A673 (cell line): ENCODE measurements at regions of chr7 and their contacts with region 1.

Region 1: GRCh38 chr7:25565949-25566348 is 337.7 kb upstream of the NPVF start:
- DNase-seq: peak; percentile 65
- H3K4me3 ChIP-seq: no peak overlapping the region
- H3K27ac ChIP-seq: no peak overlapping the region
- H3K4me1 ChIP-seq: peaks cover 8% of the 10 kb centered on the region
- H3K27me3 ChIP-seq: no peaks in the 10 kb centered on the region
- CTCF ChIP-seq: peak; percentile 100

Region 2: DNA sequence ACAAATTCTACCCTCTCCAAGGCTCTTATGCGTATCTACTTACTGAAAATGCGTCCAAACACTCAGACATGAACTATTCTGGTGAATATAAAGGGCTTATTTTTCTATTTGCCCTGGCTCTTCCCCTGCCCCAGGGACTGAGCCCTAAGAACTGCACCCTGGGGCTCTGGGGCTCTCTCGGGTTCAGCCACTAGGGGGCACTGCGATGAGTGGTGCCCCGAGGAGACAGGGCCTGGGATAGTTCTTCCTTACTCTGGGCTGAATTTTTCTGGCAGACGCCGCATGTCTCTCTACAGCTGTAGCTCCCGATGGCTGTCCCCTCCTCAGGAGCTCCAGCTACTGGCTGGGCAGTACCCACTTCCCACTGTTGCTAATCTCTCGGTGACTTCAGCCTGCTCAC is 777.9 kb before region 1 on chr7:
- CTCF ChIA-PET with region 1: no interaction called
- POLR2A ChIA-PET with region 1: no interaction called
- intact Hi-C with region 1: no loop called
- DNase-seq: no peak
- H3K4me3 ChIP-seq: no peak overlapping the region
- H3K27ac ChIP-seq: no peak overlapping the region
- H3K4me1 ChIP-seq: no peaks in the 10 kb centered on the region
- H3K27me3 ChIP-seq: no peaks in the 10 kb centered on the region
- CTCF ChIP-seq: peak; percentile 58

Region 3: DNA sequence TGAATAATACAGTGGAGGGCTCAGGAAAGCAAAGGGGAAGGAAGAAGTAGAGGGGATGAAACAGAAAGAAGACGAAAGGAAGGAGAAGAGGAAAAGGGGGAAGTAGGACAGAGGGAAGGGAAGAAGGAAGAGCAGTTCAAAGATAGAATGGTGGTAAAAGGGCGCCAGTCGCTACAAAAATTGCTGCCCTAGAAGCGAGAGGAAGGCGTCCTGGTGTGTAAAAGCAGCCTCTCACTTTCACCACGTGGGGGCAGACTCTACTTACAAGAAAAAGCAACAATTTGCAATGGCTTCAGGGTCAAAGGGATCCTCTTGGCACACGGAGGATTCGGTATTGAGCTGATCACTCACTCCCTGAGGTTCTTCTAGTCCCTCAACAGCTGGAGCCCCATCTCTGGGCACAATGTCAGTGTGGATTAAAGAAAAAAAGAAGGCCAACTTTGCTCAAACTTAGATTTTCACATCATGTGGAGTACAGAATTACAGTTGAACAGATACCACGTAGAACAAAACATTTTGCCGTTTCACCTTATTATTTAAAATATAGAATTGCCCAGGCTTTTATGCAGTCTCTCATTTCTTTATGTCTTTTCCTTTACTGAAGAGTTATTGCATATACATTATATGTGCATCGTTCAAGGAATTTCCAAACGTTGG is 306.2 kb before region 1 on chr7:
- CTCF ChIA-PET with region 1: interaction called, 21 read pairs
- POLR2A ChIA-PET with region 1: no interaction called
- intact Hi-C with region 1: loop called (anchors 1 kb)
- DNase-seq: peak; percentile 88
- H3K4me3 ChIP-seq: no peak overlapping the region
- H3K27ac ChIP-seq: no peak overlapping the region
- H3K4me1 ChIP-seq: peaks cover 22% of the 10 kb centered on the region
- H3K27me3 ChIP-seq: peaks cover 9% of the 10 kb centered on the region
- CTCF ChIP-seq: peak; percentile 90

Region 4: GRCh38 chr7:25389489-25390106 is 176.4 kb before region 1 on chr7:
- CTCF ChIA-PET with region 1: interaction called, 3 read pairs
- POLR2A ChIA-PET with region 1: no interaction called
- intact Hi-C with region 1: loop called (anchors 1 kb)
- DNase-seq: peak; percentile 59
- H3K4me3 ChIP-seq: no peak overlapping the region
- H3K27ac ChIP-seq: no peak overlapping the region
- H3K4me1 ChIP-seq: peaks cover 8% of the 10 kb centered on the region
- H3K27me3 ChIP-seq: peaks cover 69% of the 10 kb centered on the region
- CTCF ChIP-seq: peak; percentile 63

Region 5: GRCh38 chr7:25399000-25399750 is 166.8 kb before region 1 on chr7:
- CTCF ChIA-PET with region 1: interaction called, 10 read pairs
- POLR2A ChIA-PET with region 1: no interaction called
- intact Hi-C with region 1: no loop called
- DNase-seq: no peak
- H3K4me3 ChIP-seq: no peak overlapping the region
- H3K27ac ChIP-seq: no peak overlapping the region
- H3K4me1 ChIP-seq: no peaks in the 10 kb centered on the region
- H3K27me3 ChIP-seq: peaks cover 71% of the 10 kb centered on the region
- CTCF ChIP-seq: no peak

Region 6: GRCh38 chr7:25429731-25430130 is 136.2 kb before region 1 on chr7:
- CTCF ChIA-PET with region 1: no interaction called
- POLR2A ChIA-PET with region 1: no interaction called
- intact Hi-C with region 1: no loop called
- DNase-seq: no peak
- H3K4me3 ChIP-seq: no peak overlapping the region
- H3K27ac ChIP-seq: no peak overlapping the region
- H3K4me1 ChIP-seq: no peaks in the 10 kb centered on the region
- H3K27me3 ChIP-seq: peaks cover 62% of the 10 kb centered on the region
- CTCF ChIP-seq: no peak

Region 7: DNA sequence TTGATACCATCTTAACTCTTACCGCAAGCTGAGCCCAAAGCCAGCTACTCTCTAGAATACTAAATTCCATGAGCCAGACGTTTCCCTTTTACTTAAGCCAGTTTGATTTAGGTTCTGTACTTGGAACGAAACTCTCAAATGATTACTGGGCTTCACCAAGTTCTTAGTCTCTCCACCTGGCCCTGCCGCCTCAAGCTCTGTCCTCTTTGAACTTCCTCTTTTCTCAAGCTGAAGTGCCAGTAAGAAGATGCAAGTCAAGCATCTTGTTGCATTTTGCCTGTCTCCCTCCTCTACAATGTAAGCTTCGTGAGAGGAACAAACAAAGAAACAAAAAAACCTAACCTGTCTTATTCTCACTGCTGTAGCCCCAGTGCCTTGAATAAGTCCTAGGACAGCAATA is 20.6 kb after region 1 on chr7:
- CTCF ChIA-PET with region 1: interaction called, 12 read pairs
- POLR2A ChIA-PET with region 1: no interaction called
- intact Hi-C with region 1: no loop called
- DNase-seq: no peak
- H3K4me3 ChIP-seq: no peak overlapping the region
- H3K27ac ChIP-seq: no peak overlapping the region
- H3K4me1 ChIP-seq: no peaks in the 10 kb centered on the region
- H3K27me3 ChIP-seq: peaks cover 37% of the 10 kb centered on the region
- CTCF ChIP-seq: no peak

Region 8: GRCh38 chr7:25851332-25852210 is 285.6 kb after region 1 on chr7:
- CTCF ChIA-PET with region 1: interaction called, 3 read pairs
- POLR2A ChIA-PET with region 1: no interaction called
- intact Hi-C with region 1: loop called (anchors 2 kb)
- DNase-seq: peak; percentile 87
- H3K4me3 ChIP-seq: peak overlapping the region; percentile 20
- H3K27ac ChIP-seq: no peak overlapping the region
- H3K4me1 ChIP-seq: peaks cover 6% of the 10 kb centered on the region
- H3K27me3 ChIP-seq: peaks cover 16% of the 10 kb centered on the region
- CTCF ChIP-seq: peak; percentile 92

Region 9: GRCh38 chr7:26365077-26365900 is 799.3 kb after region 1 on chr7:
- CTCF ChIA-PET with region 1: no interaction called
- POLR2A ChIA-PET with region 1: no interaction called
- intact Hi-C with region 1: loop called (anchors 5 kb)
- DNase-seq: peak; percentile 81
- H3K4me3 ChIP-seq: no peak overlapping the region
- H3K27ac ChIP-seq: no peak overlapping the region
- H3K4me1 ChIP-seq: peaks cover 2% of the 10 kb centered on the region
- H3K27me3 ChIP-seq: peaks cover 10% of the 10 kb centered on the region
- CTCF ChIP-seq: peak; percentile 72